OCI-LY7 (cell line): ENCODE measurements at regions of chr22 and their contacts with region 1.

Region 1: GRCh38 chr22:22357024-22357883 is 112.7 kb downstream of the VPREB1 start:
- DNase-seq: peak; percentile 97
- H3K4me3 ChIP-seq: peak overlapping the region; percentile 53
- H3K27ac ChIP-seq: peak overlapping the region; percentile 55
- H3K4me1 ChIP-seq: peaks cover 54% of the 10 kb centered on the region
- CTCF ChIP-seq: peak; percentile 85

Region 2: DNA sequence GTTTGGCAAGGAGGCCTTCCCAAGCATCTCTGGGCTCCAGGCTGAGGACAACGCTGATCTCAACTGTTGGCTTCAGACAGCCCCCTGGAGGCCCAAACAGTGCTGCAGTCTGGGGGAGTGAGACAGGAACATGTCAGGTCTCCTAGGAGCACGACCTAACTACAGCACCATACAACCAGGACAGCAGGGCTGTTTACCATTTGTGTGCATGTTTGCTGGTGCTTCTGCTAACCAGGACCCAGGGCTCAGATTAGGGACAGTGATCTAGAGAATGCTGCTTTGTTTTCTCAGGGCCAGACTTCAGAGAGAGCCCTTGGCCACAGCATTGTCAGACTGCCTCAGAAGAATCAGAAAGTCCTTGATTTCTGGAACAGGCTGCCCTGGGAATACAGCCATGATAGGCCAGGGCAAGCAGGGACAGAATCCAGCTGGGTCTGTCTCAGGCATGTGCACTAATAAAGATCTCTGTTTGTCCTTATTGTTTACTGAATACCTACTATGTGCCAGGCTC is 13.8 kb after region 1 on chr22:
- CTCF ChIA-PET with region 1: interaction called, 4 read pairs
- POLR2A ChIA-PET with region 1: interaction called, 3 read pairs
- intact Hi-C with region 1: loop called (anchors 1 kb)
- DNase-seq: peak; percentile 65
- H3K4me3 ChIP-seq: no peak overlapping the region
- H3K27ac ChIP-seq: peak overlapping the region; percentile 92
- H3K4me1 ChIP-seq: peaks cover 91% of the 10 kb centered on the region
- CTCF ChIP-seq: peak; percentile 70

Region 3: DNA sequence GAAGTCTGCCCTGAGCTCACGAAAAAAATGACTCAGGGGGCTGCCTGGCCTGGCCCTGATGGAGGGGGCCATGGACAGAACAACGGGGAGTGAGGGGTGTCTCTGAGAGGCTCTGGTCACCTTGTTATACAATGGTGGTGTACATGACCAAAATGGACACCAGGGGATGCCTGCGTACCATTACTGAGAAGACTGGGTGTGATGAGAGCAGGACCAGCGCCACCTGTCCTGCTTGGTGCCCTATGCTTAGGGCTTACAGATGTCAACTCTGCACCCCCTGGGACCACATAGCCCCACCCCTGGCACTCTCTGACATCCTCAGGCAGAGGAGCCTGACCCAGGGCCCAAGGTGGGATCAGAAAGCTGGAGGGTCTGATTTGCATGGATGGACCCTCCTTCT is 46.5 kb after region 1 on chr22:
- CTCF ChIA-PET with region 1: no interaction called
- POLR2A ChIA-PET with region 1: no interaction called
- intact Hi-C with region 1: loop called (anchors 2 kb)
- DNase-seq: peak; percentile 80
- H3K4me3 ChIP-seq: no peak overlapping the region
- H3K27ac ChIP-seq: peak overlapping the region; percentile 79
- H3K4me1 ChIP-seq: peaks cover 82% of the 10 kb centered on the region
- CTCF ChIP-seq: peak; percentile 60

Region 4: DNA sequence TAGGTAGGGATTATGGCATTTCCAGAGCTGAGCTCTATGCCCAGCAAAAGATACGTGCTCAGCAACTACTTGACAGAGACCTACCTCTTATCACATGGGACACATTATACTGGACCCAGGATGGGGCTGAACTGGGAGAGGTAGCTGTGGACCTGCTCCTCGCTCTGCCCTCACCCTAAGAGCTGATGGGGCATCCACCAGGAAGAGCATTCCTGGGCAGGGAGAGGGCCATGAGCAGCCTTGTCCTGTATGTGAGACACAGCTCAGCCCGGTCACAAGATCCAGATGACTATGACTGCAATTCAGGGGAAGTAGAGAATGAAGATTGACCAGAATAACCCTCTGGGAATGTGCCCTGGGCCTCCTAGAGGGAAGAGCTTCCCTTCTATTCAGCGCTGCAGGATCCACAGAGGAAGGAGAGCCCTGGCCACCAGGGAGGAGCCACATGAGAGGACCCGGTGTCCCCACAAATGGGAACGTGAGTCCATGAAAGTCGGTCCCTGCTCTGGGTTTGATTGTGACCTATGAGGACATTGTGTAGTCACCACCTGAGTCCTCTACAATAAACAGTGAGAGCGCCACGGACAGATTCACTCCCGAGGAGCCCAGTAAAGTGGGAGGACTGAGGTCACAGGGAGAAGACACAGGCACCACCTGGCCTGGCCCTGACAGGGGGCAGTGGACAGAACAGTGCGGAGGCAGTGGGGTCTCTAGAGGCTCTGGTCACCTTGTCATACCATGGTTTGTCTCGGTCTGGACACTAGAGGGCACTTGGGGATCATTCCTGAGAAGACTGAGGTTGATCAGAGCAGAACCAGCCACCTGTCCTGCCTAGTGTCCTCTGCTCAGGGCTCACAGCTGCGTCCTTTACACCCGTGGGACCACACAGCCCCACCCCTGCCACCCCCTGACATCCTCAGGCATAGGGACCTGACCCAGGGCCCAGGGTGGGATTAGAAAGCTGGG is 51.8 kb after region 1 on chr22:
- CTCF ChIA-PET with region 1: interaction called, 3 read pairs
- POLR2A ChIA-PET with region 1: no interaction called
- intact Hi-C with region 1: loop called (anchors 1 kb)
- DNase-seq: peak; percentile 87
- H3K4me3 ChIP-seq: no peak overlapping the region
- H3K27ac ChIP-seq: peak overlapping the region; percentile 59
- H3K4me1 ChIP-seq: peaks cover 64% of the 10 kb centered on the region
- CTCF ChIP-seq: peak; percentile 85

Region 5: GRCh38 chr22:22422629-22423112 is 65.4 kb after region 1 on chr22:
- CTCF ChIA-PET with region 1: no interaction called
- POLR2A ChIA-PET with region 1: no interaction called
- intact Hi-C with region 1: loop called (anchors 1 kb)
- DNase-seq: peak; percentile 99
- H3K4me3 ChIP-seq: peak overlapping the region; percentile 41
- H3K27ac ChIP-seq: peak overlapping the region; percentile 49
- H3K4me1 ChIP-seq: peaks cover 63% of the 10 kb centered on the region
- CTCF ChIP-seq: peak; percentile 99

Region 6: DNA sequence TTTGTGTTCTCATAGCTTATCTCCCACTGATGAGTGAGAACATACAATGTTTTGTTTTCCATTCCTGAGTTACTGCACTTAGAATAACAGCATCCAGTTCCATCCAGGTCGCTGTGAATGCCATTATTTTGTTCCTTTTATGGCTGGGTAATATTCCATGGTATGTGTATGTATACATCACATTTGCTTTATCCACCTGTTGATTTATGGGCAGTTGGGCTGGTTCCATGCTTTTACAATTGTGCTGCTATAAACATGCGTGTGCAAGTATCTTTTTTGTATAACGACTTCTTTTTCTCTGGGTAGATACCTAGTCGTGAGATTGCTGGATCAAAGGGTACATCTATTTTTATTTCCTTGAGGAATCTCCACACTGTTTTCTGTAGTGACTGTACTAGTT is 76.5 kb after region 1 on chr22:
- CTCF ChIA-PET with region 1: no interaction called
- POLR2A ChIA-PET with region 1: no interaction called
- intact Hi-C with region 1: no loop called
- DNase-seq: no peak
- H3K4me3 ChIP-seq: no peak overlapping the region
- H3K27ac ChIP-seq: no peak overlapping the region
- H3K4me1 ChIP-seq: peaks cover 36% of the 10 kb centered on the region
- CTCF ChIP-seq: no peak

Region 7: GRCh38 chr22:22463855-22464540 is 106.7 kb after region 1 on chr22:
- CTCF ChIA-PET with region 1: interaction called, 5 read pairs
- POLR2A ChIA-PET with region 1: interaction called, 3 read pairs
- intact Hi-C with region 1: loop called (anchors 1 kb)
- DNase-seq: peak; percentile 84
- H3K4me3 ChIP-seq: peak overlapping the region; percentile 27
- H3K27ac ChIP-seq: no peak overlapping the region
- H3K4me1 ChIP-seq: peaks cover 20% of the 10 kb centered on the region
- CTCF ChIP-seq: peak; percentile 94